CD8-positive, alpha-beta memory T cell (primary cell): ENCODE measurements at regions of chr1 and their contacts with region 1.

Region 1: GRCh38 chr1:225999227-225999911 is at the start of gene SDE2:
- DNase-seq: peak; percentile 99 to 100 (median 100)
- H3K4me3 ChIP-seq: peak within 1 kb of the TSS; percentile 79
- H3K4me3 Mint-ChIP-seq: peak within 1 kb of the TSS; percentile 98 to 100 (median 100)
- H3K27ac ChIP-seq: peak within 1 kb of the TSS; percentile 99
- H3K27ac Mint-ChIP-seq: peak within 1 kb of the TSS; percentile 96 to 100 (median 100)
- H3K4me1 ChIP-seq: peaks cover 81% of the 10 kb centered on the region
- H3K4me1 Mint-ChIP-seq: peaks cover 55 to 87% (median 81%) of the 10 kb centered on the region in 3 donors
- H3K27me3 ChIP-seq: no peaks in the 10 kb centered on the region
- H3K27me3 Mint-ChIP-seq: peaks cover 0 to 1% of the 10 kb centered on the region in 2 donors
- total RNA-seq, gene SDE2: 23.4 to 23.6 TPM

Region 2: GRCh38 chr1:225428068-225428880 is 571.1 kb before region 1 on chr1:
- CTCF ChIA-PET with region 1: no interaction called
- POLR2A ChIA-PET with region 1: interaction called, 11 read pairs
- DNase-seq: peak; percentile 88 to 95 (median 89)
- H3K4me3 ChIP-seq: peak overlapping the region; percentile 88
- H3K4me3 Mint-ChIP-seq: peak overlapping the region; percentile 86 to 95 (median 91)
- H3K27ac ChIP-seq: peak overlapping the region; percentile 86
- H3K27ac Mint-ChIP-seq: peak overlapping the region; percentile 87 to 96 (median 93)
- H3K4me1 ChIP-seq: peaks cover 41% of the 10 kb centered on the region
- H3K4me1 Mint-ChIP-seq: peaks cover 42 to 46% (median 46%) of the 10 kb centered on the region in 3 donors
- H3K27me3 ChIP-seq: no peaks in the 10 kb centered on the region
- H3K27me3 Mint-ChIP-seq: no peaks in the 10 kb centered on the region

Region 3: GRCh38 chr1:225467193-225468020 is 532.0 kb before region 1 on chr1:
- CTCF ChIA-PET with region 1: no interaction called
- POLR2A ChIA-PET with region 1: interaction called, 16 read pairs
- DNase-seq: peak; percentile 73 to 88 (median 86)
- H3K4me3 ChIP-seq: peak overlapping the region; percentile 84
- H3K4me3 Mint-ChIP-seq: peak overlapping the region; percentile 88 to 96 (median 92)
- H3K27ac ChIP-seq: peak overlapping the region; percentile 90
- H3K27ac Mint-ChIP-seq: peak overlapping the region; percentile 92 to 100 (median 98)
- H3K4me1 ChIP-seq: peaks cover 29% of the 10 kb centered on the region
- H3K4me1 Mint-ChIP-seq: peaks cover 47 to 65% (median 55%) of the 10 kb centered on the region in 3 donors
- H3K27me3 ChIP-seq: no peaks in the 10 kb centered on the region
- H3K27me3 Mint-ChIP-seq: peaks cover 0 to 3% of the 10 kb centered on the region in 2 donors

Region 4: DNA sequence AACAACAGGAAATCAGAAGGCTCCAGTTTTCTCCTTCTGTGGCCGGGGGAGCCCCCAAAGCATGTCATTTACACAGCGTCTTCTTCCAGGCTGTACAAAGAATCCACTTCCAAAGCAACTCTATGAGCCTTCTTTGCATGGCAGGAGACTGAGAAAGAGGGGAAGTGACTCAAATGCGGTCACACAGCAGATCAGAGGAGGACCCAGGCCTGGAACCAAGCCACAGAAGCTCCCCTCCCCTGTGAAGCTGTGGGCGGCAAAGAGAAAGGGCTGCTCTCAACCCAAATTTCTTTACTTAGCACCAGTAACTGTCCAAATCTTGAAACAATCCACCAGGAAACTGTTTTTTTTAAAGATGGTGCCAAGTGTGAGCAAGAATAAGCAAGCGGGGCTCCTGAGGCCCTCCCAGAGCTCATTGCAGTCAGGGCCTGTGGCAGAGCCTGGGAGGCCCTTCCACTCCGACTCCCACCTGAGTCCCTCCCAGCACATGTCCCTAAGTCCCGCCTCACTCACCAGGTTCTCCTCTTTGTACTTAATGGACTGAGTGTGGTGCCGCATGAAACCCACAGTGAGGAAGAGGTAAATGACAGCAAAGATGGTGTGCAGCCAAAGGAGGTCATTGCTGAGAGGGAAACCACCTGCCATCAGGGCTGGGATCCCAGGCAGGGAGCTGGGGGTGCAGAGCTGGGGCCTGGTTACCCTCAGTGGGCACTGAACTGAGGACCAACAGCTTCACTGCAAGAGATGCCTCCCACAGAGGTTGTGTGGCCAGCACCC is 133.1 kb before region 1 on chr1:
- CTCF ChIA-PET with region 1: no interaction called
- POLR2A ChIA-PET with region 1: no interaction called
- DNase-seq: peak; percentile 40 to 82 (median 70)
- H3K4me3 ChIP-seq: no peak overlapping the region
- H3K4me3 Mint-ChIP-seq: peak overlapping the region; percentile 2 to 79 (median 71)
- H3K27ac ChIP-seq: no peak overlapping the region
- H3K27ac Mint-ChIP-seq: peak overlapping the region; percentile 75 to 97 (median 92)
- H3K4me1 ChIP-seq: peaks cover 31% of the 10 kb centered on the region
- H3K4me1 Mint-ChIP-seq: peaks cover 40 to 51% (median 48%) of the 10 kb centered on the region in 3 donors
- H3K27me3 ChIP-seq: no peaks in the 10 kb centered on the region
- H3K27me3 Mint-ChIP-seq: no peaks in the 10 kb centered on the region

Region 5: DNA sequence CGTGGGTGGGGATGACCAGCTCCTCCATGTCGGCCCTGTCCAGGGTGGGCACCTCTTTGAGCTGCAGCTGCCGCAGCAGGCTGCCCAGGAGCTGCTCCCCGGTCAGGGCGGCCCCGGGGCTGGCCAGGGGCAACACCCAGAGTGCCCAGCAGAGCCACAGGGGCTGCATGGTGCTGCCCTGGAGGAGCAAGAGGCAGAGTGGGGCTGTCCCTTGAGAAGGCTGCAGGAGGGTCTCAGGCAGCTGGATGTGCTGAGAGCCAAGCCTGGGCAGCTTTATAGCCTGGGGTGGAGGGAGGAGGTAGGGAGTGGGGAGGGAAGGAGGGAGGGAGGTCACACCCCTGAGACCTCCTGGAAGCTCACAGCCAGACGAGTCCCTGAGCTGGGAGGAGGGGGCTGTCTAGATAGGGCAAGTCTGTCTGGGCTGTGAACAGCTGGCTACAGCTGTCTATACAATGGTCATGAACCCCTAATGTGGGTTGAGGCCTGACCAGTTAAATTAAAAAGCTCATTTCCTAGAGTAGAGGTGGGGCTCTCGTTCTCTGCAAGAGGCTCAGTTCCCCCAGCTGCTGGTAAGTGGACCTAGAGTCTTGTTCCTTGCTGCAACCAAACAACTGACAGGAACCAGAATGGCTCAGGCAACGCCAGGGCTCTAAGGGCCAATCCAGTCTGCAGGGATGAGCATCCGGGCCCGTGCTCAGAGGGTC is 110.3 kb before region 1 on chr1 and contains the start of gene LEFTY1:
- CTCF ChIA-PET with region 1: no interaction called
- POLR2A ChIA-PET with region 1: no interaction called
- DNase-seq: no peak
- H3K4me3 ChIP-seq: no peak within 1 kb of the TSS
- H3K4me3 Mint-ChIP-seq: peak within 1 kb of the TSS in 1 of 7 donors; percentile 34
- H3K27ac ChIP-seq: no peak within 1 kb of the TSS
- H3K27ac Mint-ChIP-seq: peak within 1 kb of the TSS in 2 of 8 donors; percentile 69 to 75
- H3K4me1 ChIP-seq: no peaks in the 10 kb centered on the region
- H3K4me1 Mint-ChIP-seq: peaks cover 4 to 19% (median 6%) of the 10 kb centered on the region in 3 donors
- H3K27me3 ChIP-seq: no peaks in the 10 kb centered on the region
- H3K27me3 Mint-ChIP-seq: peaks cover 0 to 1% of the 10 kb centered on the region in 2 donors
- total RNA-seq, gene LEFTY1: not detected

Region 6: DNA sequence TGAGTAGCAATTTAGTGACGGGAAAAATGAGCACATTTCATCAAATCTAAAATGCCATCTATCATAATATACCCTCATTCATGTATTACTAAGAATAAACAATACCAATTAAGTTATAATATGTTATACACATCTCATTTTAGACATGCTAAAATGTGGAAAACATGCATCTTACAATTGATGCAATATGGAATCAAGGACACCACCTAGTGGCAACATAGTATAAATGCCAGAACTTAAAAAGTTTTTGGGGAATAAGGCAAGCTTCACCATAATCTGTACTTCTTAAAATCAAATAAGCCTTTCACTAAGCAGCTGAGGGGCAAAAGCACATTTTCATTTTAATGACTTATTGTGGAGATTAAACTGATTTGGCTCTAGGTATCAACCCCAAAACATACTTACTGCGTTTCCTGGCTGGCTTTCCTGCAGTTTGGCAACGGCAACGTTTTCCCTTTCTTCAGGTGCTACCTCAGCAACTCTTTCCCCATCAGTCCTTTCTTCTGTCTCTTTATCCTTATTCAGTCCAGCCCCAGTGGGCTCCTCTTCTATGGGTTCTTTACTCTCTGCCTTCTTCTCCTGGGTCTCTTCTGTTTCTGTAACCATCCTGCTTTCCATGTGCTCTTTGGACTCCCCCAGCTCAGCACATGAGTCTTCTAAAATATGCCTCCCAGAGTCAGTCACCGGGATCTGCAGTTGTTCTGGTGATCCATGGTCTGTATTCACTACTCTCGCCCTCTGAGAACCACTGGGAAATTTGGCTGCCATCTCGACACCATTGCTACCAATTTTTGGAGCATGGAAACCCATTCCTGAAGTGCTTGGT is 11.7 kb before region 1 on chr1:
- CTCF ChIA-PET with region 1: interaction called, 13 read pairs
- POLR2A ChIA-PET with region 1: interaction called, 9 read pairs
- DNase-seq: peak in 1 of 5 donors; percentile 49
- H3K4me3 ChIP-seq: no peak overlapping the region
- H3K4me3 Mint-ChIP-seq: no peak overlapping the region
- H3K27ac ChIP-seq: no peak overlapping the region
- H3K27ac Mint-ChIP-seq: peak overlapping the region in 4 of 8 donors; percentile 23 to 86 (median 58)
- H3K4me1 ChIP-seq: peaks cover 15% of the 10 kb centered on the region
- H3K4me1 Mint-ChIP-seq: peaks cover 28 to 41% (median 39%) of the 10 kb centered on the region in 3 donors
- H3K27me3 ChIP-seq: no peaks in the 10 kb centered on the region
- H3K27me3 Mint-ChIP-seq: no peaks in the 10 kb centered on the region